ENCODE measurements at regions of chr12 and their contacts with region 1.

Region 1: DNA sequence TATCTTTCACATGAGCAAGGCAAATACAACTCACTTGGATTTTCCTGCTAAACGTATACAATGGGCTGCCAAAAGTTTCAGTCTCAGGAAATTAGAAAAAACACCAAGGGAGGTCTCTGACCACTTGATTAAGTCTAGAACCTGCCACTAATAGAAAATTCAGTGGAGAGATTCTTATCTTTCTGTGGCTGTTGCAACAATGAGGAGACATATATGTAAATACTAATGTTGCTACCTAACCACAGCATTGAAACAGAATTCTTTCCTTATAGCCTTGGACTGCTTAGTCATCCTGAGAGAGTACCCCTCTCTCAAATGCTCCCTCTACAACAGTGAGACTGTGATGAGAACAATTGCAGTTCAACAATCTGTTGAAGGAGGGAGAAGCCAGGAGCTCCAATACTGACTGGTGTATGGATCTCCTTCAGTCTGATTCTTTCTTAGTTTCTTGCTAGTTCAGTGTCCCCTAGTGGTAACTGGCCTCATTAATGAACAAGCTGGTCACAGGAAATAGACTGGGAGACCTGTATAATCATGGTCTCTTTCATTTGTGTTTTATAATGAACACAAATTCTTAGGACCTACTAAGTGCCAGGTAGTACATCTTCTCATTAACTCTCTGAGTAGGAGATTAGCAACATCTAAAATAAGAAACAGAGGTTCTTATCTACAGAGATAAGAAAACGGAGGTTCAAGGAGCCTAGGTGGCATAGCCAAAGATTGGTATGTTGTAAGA is 164.5 kb downstream of the SLC38A4 start:
- DNase-seq: peak in 1 of 3 donors; percentile 63
- ATAC-seq: peak; percentile 92
- H3K4me3 ChIP-seq: no peak overlapping the region
- H3K4me1 ChIP-seq: no peaks in the 10 kb centered on the region
- CTCF ChIP-seq: peak; percentile 50

Region 2: DNA sequence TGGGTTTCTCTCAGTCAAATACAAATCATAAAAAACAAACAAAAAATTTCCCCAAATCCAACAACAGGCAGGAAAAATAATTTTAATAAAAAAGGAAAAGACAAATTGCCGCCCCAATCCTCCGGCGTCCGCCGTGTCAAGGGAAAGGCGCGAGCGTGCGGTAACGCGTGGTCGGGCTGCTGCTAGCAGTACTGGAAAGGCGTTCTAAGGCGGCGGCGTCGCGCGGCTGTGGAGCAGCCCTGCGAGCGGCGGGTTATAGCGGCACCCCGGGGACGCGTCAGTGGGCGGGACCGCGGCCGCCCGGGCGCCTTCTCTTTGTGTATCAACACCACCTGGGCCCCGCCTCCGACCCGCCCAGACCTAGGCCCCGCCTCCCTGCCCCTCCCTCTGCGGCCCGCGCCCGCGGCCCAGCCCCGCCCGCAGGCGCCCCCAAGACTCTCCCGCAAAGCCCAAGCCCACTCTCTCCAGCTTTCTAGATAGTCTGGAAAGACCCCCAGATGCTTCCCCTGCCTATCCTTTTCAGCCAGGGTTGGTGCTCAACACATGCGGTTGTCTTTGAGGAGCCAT is 288.7 kb before region 1 on chr12 and contains the start of gene SLC38A2:
- intact Hi-C with region 1: loop called in 1 of 2 experiments (anchors 10 kb)
- DNase-seq: peak; percentile 99
- ATAC-seq: peak; percentile 93
- H3K4me3 ChIP-seq: peak within 1 kb of the TSS; percentile 99
- H3K4me1 ChIP-seq: peaks cover 35% of the 10 kb centered on the region
- CTCF ChIP-seq: no peak
- total RNA-seq, gene SLC38A2: 82.9 to 216 (median 143) TPM

Region 3: GRCh38 chr12:46473634-46474329 is 187.5 kb before region 1 on chr12:
- intact Hi-C with region 1: loop called in 1 of 2 experiments (anchors 10 kb)
- DNase-seq: peak; percentile 58 to 74 (median 66)
- ATAC-seq: peak; percentile 97
- H3K4me3 ChIP-seq: no peak overlapping the region
- H3K4me1 ChIP-seq: peaks cover 13% of the 10 kb centered on the region
- CTCF ChIP-seq: no peak